Natural killer cell (primary cell): ENCODE measurements at regions of chr3 and their contacts with region 1.

Region 1: GRCh38 chr3:58305882-58306711 is at the starts of genes HTD2 and RPP14:
- DNase-seq: peak; percentile 99 to 100
- ATAC-seq: peak; percentile 90 to 97 (median 91)
- H3K4me3 ChIP-seq: peak within 1 kb of the TSS; percentile 79
- H3K4me3 Mint-ChIP-seq: peak within 1 kb of the TSS; percentile 100
- H3K27ac ChIP-seq: peak within 1 kb of the TSS; percentile 95
- H3K27ac Mint-ChIP-seq: peak within 1 kb of the TSS; percentile 99
- H3K4me1 ChIP-seq: peaks cover 24% of the 10 kb centered on the region
- H3K4me1 Mint-ChIP-seq: peaks cover 30 to 32% of the 10 kb centered on the region in 2 donors
- H3K27me3 ChIP-seq: no peaks in the 10 kb centered on the region
- H3K27me3 Mint-ChIP-seq: peaks cover 8 to 17% of the 10 kb centered on the region in 2 donors
- CTCF ChIP-seq: peak; percentile 96
- total RNA-seq, gene HTD2: 3.3 to 5.5 (median 3.7) TPM
- total RNA-seq, gene RPP14: 13.1 to 18.8 (median 17.0) TPM

Region 2: GRCh38 chr3:58237238-58237940 is 68.7 kb before region 1 on chr3 and contains the start of gene ABHD6:
- intact Hi-C with region 1: loop called (anchors 1 kb)
- DNase-seq: peak; percentile 87
- ATAC-seq: peak; percentile 85 to 91 (median 88)
- H3K4me3 ChIP-seq: peak within 1 kb of the TSS; percentile 94
- H3K4me3 Mint-ChIP-seq: peak within 1 kb of the TSS; percentile 90
- H3K27ac ChIP-seq: peak within 1 kb of the TSS; percentile 51
- H3K27ac Mint-ChIP-seq: peak within 1 kb of the TSS in 1 of 2 donors; percentile 84
- H3K4me1 ChIP-seq: peaks cover 19% of the 10 kb centered on the region
- H3K4me1 Mint-ChIP-seq: peaks cover 12 to 25% of the 10 kb centered on the region in 2 donors
- H3K27me3 ChIP-seq: no peaks in the 10 kb centered on the region
- H3K27me3 Mint-ChIP-seq: peaks cover 5 to 13% of the 10 kb centered on the region in 2 donors
- CTCF ChIP-seq: peak; percentile 19
- total RNA-seq, gene ABHD6: 5.0 to 10.6 (median 9.3) TPM

Region 3: GRCh38 chr3:58332575-58333188 is 26.6 kb after region 1 on chr3 and contains the start of gene PXK:
- intact Hi-C with region 1: loop called (anchors 2 kb)
- DNase-seq: peak; percentile 84 to 85
- ATAC-seq: peak; percentile 79 to 93 (median 90)
- H3K4me3 ChIP-seq: peak within 1 kb of the TSS; percentile 81
- H3K4me3 Mint-ChIP-seq: peak within 1 kb of the TSS; percentile 99
- H3K27ac ChIP-seq: peak within 1 kb of the TSS; percentile 17
- H3K27ac Mint-ChIP-seq: peak within 1 kb of the TSS; percentile 87 to 91
- H3K4me1 ChIP-seq: peaks cover 13% of the 10 kb centered on the region
- H3K4me1 Mint-ChIP-seq: peaks cover 33 to 45% of the 10 kb centered on the region in 2 donors
- H3K27me3 ChIP-seq: no peaks in the 10 kb centered on the region
- H3K27me3 Mint-ChIP-seq: no peaks in the 10 kb centered on the region
- CTCF ChIP-seq: peak; percentile 10
- total RNA-seq, gene PXK: 42.1 to 53.8 (median 48.9) TPM

Region 4: GRCh38 chr3:58414538-58415197 is 108.6 kb after region 1 on chr3:
- intact Hi-C with region 1: loop called (anchors 1 kb)
- DNase-seq: peak in 1 of 2 donors; percentile 76
- ATAC-seq: peak in 2 of 3 donors; percentile 78 to 97
- H3K4me3 ChIP-seq: no peak overlapping the region
- H3K4me3 Mint-ChIP-seq: no peak overlapping the region
- H3K27ac ChIP-seq: no peak overlapping the region
- H3K27ac Mint-ChIP-seq: peak overlapping the region; percentile 16 to 34
- H3K4me1 ChIP-seq: no peaks in the 10 kb centered on the region
- H3K4me1 Mint-ChIP-seq: peaks cover 6 to 15% of the 10 kb centered on the region in 2 donors
- H3K27me3 ChIP-seq: no peaks in the 10 kb centered on the region
- H3K27me3 Mint-ChIP-seq: no peaks in the 10 kb centered on the region
- CTCF ChIP-seq: peak; percentile 75

Region 5: GRCh38 chr3:58433400-58434169 is 127.5 kb after region 1 on chr3 and contains the start of gene PDHB:
- intact Hi-C with region 1: loop called (anchors 1 kb)
- DNase-seq: peak; percentile 83 to 93
- ATAC-seq: peak; percentile 94 to 98 (median 95)
- H3K4me3 ChIP-seq: peak within 1 kb of the TSS; percentile 86
- H3K4me3 Mint-ChIP-seq: peak within 1 kb of the TSS; percentile 90
- H3K27ac ChIP-seq: peak within 1 kb of the TSS; percentile 82
- H3K27ac Mint-ChIP-seq: peak within 1 kb of the TSS; percentile 89 to 96
- H3K4me1 ChIP-seq: peaks cover 12% of the 10 kb centered on the region
- H3K4me1 Mint-ChIP-seq: peaks cover 19 to 22% of the 10 kb centered on the region in 2 donors
- H3K27me3 ChIP-seq: no peaks in the 10 kb centered on the region
- H3K27me3 Mint-ChIP-seq: peaks cover 0 to 7% of the 10 kb centered on the region in 2 donors
- CTCF ChIP-seq: no peak
- total RNA-seq, gene PDHB: 33.7 to 52.4 (median 39.9) TPM

Region 6: GRCh38 chr3:58452176-58452575 is 146.1 kb after region 1 on chr3:
- intact Hi-C with region 1: no loop called
- DNase-seq: no peak
- ATAC-seq: no peak
- H3K4me3 ChIP-seq: no peak overlapping the region
- H3K4me3 Mint-ChIP-seq: no peak overlapping the region
- H3K27ac ChIP-seq: no peak overlapping the region
- H3K27ac Mint-ChIP-seq: no peak overlapping the region
- H3K4me1 ChIP-seq: no peaks in the 10 kb centered on the region
- H3K4me1 Mint-ChIP-seq: no peaks in the 10 kb centered on the region
- H3K27me3 ChIP-seq: no peaks in the 10 kb centered on the region
- H3K27me3 Mint-ChIP-seq: no peaks in the 10 kb centered on the region
- CTCF ChIP-seq: no peak

Region 7: DNA sequence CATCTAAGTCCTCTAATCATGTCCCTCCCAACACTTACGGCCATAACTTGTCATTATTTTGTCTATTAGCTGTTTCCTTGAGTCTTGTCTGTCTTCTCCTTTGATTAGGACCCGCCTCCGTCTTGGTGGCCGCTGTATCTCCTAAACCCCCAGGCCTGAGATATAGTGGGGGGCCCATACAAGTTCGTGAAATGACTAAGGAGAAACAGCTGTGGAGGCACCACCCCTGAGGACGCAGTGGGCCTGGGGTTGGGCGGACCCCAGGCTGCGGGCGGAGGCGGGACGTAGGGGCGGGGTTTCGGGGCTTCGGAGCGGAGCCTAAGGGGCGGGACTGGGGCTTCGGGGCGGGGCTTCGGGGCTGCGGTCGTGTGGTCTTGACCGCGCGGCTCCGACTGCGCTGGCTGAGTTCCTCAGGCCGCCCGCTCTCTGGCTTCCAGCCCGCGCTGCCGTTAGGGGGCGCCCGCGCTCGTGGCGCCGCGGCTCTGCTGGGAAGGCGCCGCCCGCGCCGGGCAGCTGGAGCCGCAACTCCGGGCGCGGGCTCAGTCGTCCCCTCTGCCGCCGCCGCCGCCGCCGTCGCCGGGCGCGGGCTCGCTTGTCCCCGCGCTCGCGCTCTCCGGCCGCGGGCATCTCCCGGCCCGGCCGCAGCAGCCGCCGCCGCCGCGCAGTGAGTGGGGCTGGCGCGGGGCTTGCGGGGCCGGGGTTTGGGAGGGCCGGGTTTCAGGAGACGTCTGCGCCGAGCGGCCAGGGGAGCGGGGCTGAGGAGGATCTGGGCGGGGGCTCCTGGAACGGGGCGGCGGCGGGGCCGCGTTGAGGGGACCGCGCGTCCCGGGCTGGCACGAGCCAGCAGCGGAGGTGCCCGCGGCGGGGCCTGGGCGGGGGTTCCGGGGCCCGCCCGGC is 185.7 kb after region 1 on chr3 and contains the start of gene KCTD6:
- intact Hi-C with region 1: loop called (anchors 1 kb)
- DNase-seq: peak; percentile 91 to 93
- ATAC-seq: peak; percentile 88 to 97 (median 93)
- H3K4me3 ChIP-seq: peak within 1 kb of the TSS; percentile 72
- H3K4me3 Mint-ChIP-seq: peak within 1 kb of the TSS; percentile 94
- H3K27ac ChIP-seq: peak within 1 kb of the TSS; percentile 54
- H3K27ac Mint-ChIP-seq: peak within 1 kb of the TSS; percentile 68 to 87
- H3K4me1 ChIP-seq: peaks cover 25% of the 10 kb centered on the region
- H3K4me1 Mint-ChIP-seq: peaks cover 45 to 57% of the 10 kb centered on the region in 2 donors
- H3K27me3 ChIP-seq: no peaks in the 10 kb centered on the region
- H3K27me3 Mint-ChIP-seq: peaks cover 7 to 10% of the 10 kb centered on the region in 2 donors
- CTCF ChIP-seq: peak; percentile 52
- total RNA-seq, gene KCTD6: 4.5 to 12.9 (median 7.5) TPM